ENCODE measurements at regions of chr19 and their contacts with region 1.

Region 1: GRCh38 chr19:41203371-41203770 is 10.4 kb downstream of the CYP2S1 start:
- DNase-seq: no peak
- H3K4me3 ChIP-seq: no peak overlapping the region
- CTCF ChIP-seq: no peak
- POLR2A ChIP-seq: no peak

Region 2: DNA sequence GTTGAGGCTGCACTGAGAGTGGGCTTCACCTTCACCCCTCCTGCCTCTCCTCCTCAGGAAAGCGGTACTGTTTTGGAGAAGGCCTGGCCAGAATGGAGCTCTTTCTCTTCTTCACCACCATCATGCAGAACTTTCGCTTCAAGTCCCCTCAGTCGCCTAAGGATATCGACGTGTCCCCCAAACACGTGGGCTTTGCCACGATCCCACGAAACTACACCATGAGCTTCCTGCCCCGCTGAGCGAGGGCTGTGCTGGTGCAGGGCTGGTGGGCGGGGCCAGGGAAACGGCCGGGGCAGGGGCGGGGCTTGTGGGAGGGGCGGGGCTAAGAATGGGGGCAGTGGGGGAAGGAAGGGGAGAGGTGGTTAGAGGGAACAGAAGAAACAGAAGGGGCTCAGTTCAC is 107.7 kb before region 1 on chr19:
- intact Hi-C with region 1: no loop called
- DNase-seq: no peak
- H3K4me3 ChIP-seq: no peak overlapping the region
- CTCF ChIP-seq: no peak
- POLR2A ChIP-seq: no peak

Region 3: GRCh38 chr19:41263850-41264580 is 60.6 kb after region 1 on chr19 and contains the start of gene HNRNPUL1:
- intact Hi-C with region 1: loop called (anchors 5 kb)
- DNase-seq: peak; percentile 100
- H3K4me3 ChIP-seq: peak within 1 kb of the TSS; percentile 86
- CTCF ChIP-seq: peak in 1 of 3 donors; percentile 6
- POLR2A ChIP-seq: no peak
- total RNA-seq, gene HNRNPUL1: 130 to 196 (median 152) TPM

Region 4: DNA sequence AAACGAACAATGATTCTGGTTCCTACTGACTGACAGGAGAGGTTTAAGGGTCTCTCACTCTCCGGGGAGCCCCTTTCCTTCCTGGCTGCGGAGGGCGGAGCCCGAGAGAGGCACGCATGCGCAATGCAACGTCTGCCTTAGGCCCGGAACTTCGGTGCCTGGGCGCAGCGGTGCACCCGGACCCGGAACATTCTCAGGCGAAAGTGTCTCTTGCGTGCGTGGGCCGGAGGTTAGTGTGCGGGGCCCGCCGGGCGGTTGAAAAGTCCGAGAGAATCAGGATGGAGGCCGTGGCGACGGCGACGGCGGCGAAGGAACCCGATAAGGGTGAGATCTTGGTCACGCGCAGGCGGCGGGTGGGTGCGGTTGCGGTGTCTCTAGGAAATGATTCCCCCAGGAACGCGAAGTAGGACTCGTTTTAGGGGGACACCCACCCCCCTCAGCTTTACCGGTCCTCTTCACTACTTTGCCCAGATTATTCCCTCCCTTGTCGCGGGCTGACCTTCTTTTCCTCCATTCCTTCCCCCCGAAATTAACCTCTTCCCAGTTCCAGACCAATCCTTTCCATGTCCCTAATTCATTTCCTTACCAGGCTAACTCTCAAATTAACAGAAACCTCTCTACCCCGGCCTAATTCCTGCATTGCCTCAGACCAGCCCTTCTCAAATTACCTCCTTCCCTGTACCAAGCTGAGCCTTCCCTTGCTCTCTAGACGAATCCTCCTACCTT is 106.8 kb after region 1 on chr19 and contains the start of gene CCDC97:
- intact Hi-C with region 1: loop called (anchors 5 kb)
- DNase-seq: peak; percentile 78 to 97
- H3K4me3 ChIP-seq: peak within 1 kb of the TSS; percentile 50
- CTCF ChIP-seq: peak in 1 of 3 donors; percentile 4
- POLR2A ChIP-seq: peak in 1 of 2 donors; percentile 44
- total RNA-seq, gene CCDC97: 11.6 to 19.6 (median 13.7) TPM